CD4-positive, alpha-beta T cell (primary cell): ENCODE measurements at regions of chr14 and their contacts with region 1.

Region 1: DNA sequence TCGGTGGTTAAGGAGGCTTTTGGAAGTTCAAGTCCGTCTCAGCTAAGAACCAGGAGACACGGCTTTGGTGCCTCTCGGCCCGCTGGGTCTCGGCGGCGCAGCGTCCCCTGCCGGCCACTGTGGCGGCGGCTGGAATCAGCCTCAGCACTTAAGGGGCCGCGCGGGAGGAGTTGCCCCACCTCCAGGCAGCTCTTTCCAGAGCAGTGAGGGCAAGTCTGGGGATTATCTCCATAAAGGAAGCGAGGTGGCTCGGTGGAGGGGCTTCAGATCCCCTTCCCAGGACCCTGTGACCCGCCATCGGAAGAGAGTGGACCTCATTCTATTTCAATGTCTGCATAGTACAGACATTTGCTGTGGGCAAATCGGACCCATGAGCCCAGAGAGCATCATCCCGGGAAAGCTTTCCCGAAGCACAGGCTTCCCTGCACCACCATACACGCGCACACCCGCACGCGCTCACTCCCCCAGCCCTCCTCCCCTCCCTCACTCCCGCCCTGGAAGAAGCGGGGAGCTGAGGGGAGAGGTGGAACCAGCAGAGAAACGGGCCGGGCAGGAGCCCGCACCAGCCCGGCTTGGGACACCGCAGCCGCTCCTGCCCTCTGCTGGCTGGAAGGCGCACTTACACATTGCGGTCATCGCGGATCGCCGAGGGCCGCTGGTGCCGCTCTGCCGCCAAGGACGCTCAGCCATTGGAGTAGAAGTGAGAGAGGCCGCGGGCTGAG is 15.9 kb downstream of the RNASE2 start:
- DNase-seq: peak; percentile 55 to 90 (median 70)
- ATAC-seq: peak; percentile 87
- H3K4me3 ChIP-seq: peak overlapping the region; percentile 69
- H3K4me3 Mint-ChIP-seq: peak overlapping the region; percentile 93
- H3K27ac ChIP-seq: no peak overlapping the region
- H3K27ac Mint-ChIP-seq: no peak overlapping the region
- H3K4me1 ChIP-seq: peaks cover 15% of the 10 kb centered on the region
- H3K4me1 Mint-ChIP-seq: peaks cover 15% of the 10 kb centered on the region
- H3K27me3 ChIP-seq: peaks cover 12% of the 10 kb centered on the region in 2 experiments
- H3K27me3 Mint-ChIP-seq: peaks cover 39% of the 10 kb centered on the region
- CTCF ChIP-seq: peak; percentile 89

Region 2: DNA sequence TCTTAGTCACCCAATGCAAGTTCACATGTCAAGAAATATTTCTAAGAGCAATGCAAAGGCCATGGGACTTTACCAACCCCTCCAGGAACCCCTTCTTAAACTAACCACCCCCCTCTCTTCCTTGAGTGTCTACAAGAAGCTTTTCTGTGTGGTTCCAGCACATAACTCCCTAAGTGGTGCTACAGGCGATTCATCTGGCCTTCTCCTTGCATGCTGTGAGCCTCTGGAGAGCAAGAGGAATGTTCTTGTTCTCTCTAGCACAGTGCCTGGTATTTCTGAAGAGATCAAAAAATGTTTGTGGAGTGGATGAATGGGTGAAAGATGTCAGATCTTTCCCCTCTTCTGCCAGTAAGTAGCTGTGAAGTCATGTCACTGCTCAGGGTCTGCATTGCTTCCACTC is 374.0 kb before region 1 on chr14:
- CTCF ChIA-PET with region 1: no interaction called
- POLR2A ChIA-PET with region 1: no interaction called
- intact Hi-C with region 1: no loop called
- DNase-seq: no peak
- ATAC-seq: no peak
- H3K4me3 ChIP-seq: no peak overlapping the region
- H3K4me3 Mint-ChIP-seq: no peak overlapping the region
- H3K27ac ChIP-seq: no peak overlapping the region
- H3K27ac Mint-ChIP-seq: no peak overlapping the region
- H3K4me1 ChIP-seq: no peaks in the 10 kb centered on the region
- H3K4me1 Mint-ChIP-seq: peaks cover 6% of the 10 kb centered on the region
- H3K27me3 ChIP-seq: no peaks in the 10 kb centered on the region
- H3K27me3 Mint-ChIP-seq: no peaks in the 10 kb centered on the region
- CTCF ChIP-seq: no peak

Region 3: GRCh38 chr14:20697273-20698017 is 273.7 kb before region 1 on chr14:
- CTCF ChIA-PET with region 1: interaction called, 7 read pairs
- POLR2A ChIA-PET with region 1: no interaction called
- intact Hi-C with region 1: loop called (anchors 1 to 2 kb)
- DNase-seq: peak; percentile 42 to 83 (median 56)
- ATAC-seq: peak; percentile 80
- H3K4me3 ChIP-seq: no peak overlapping the region
- H3K4me3 Mint-ChIP-seq: no peak overlapping the region
- H3K27ac ChIP-seq: no peak overlapping the region
- H3K27ac Mint-ChIP-seq: no peak overlapping the region
- H3K4me1 ChIP-seq: no peaks in the 10 kb centered on the region
- H3K4me1 Mint-ChIP-seq: no peaks in the 10 kb centered on the region
- H3K27me3 ChIP-seq: no peaks in the 10 kb centered on the region
- H3K27me3 Mint-ChIP-seq: no peaks in the 10 kb centered on the region
- CTCF ChIP-seq: peak; percentile 78

Region 4: DNA sequence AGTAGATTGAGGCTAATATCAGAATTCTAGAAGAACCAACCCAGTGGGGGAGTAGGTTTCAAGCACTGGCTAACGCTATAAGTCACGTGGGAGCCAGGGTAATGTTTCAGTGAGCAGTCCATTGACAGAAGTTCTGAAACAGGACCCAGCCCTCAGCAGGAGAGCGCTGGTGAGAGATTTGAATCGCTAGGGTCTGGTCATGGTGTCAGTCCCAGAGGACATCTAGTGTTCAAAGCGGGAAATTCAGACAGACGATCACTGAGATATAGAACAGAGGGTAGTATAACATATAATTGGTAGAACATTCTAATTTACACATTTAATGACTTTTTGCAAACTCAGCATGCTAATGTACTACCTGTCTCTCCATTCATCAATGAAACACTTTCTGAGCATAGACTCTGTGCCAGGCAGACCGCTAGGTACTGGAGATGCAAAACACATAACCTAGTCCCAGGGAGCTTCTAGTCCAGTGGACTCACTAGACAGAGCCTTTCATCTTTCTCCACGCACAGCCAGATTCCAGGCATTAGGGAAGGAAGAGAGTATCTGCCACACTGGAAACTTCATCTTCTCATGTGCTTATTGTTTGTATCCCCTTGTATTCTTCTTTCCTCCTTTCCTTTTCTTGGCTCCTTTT is 115.4 kb before region 1 on chr14:
- CTCF ChIA-PET with region 1: interaction called, 18 read pairs
- POLR2A ChIA-PET with region 1: interaction called, 4 read pairs
- intact Hi-C with region 1: loop called (anchors 1 kb)
- DNase-seq: peak in 11 of 14 experiments; percentile 8 to 79 (median 25)
- ATAC-seq: peak; percentile 92
- H3K4me3 ChIP-seq: no peak overlapping the region
- H3K4me3 Mint-ChIP-seq: no peak overlapping the region
- H3K27ac ChIP-seq: no peak overlapping the region
- H3K27ac Mint-ChIP-seq: no peak overlapping the region
- H3K4me1 ChIP-seq: no peaks in the 10 kb centered on the region
- H3K4me1 Mint-ChIP-seq: no peaks in the 10 kb centered on the region
- H3K27me3 ChIP-seq: peaks cover 0 to 6% of the 10 kb centered on the region in 2 experiments
- H3K27me3 Mint-ChIP-seq: peaks cover 25% of the 10 kb centered on the region
- CTCF ChIP-seq: peak; percentile 67

Region 5: DNA sequence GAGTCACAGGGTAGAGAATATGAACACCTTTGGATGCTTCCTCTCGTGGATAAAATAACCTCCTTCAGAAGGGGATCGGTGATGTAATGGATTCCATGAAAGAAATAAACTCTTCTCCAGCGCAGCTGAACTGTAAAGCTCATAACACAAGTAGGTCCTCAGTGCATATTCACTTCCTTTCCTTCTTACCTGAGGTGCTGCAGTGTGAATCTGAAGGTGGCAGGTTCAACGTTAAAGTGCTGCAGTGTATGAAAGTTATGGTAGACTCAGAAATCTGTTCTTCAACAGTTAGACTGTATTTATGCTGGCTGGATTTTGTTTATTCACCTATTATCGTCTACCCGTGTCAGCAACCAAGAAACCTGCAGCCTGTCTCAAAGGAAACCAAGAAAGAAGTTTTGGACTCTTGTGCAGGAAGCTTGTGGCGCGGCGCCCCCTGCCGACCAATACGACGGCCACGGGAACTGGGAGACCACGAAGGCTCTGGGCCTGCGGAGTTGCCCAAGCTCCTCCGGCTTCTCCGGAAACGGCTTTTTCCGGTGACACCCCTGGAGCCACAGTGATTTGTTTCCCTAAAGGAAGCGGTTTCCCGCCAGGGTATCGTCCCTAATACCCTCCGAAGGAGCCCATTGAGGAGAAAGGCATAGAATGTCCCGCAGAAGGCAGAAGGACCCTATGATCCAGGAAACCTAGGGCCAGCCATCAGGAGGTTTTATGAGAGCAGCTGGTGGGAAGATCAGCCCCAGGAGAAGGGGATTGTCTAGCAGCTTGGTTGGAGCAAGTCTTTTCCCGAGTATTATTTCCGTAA is 97.6 kb before region 1 on chr14:
- CTCF ChIA-PET with region 1: interaction called, 6 read pairs
- POLR2A ChIA-PET with region 1: no interaction called
- intact Hi-C with region 1: loop called in 1 of 2 experiments (anchors 5 kb)
- DNase-seq: peak; percentile 57 to 85 (median 70)
- ATAC-seq: peak; percentile 71
- H3K4me3 ChIP-seq: no peak overlapping the region
- H3K4me3 Mint-ChIP-seq: no peak overlapping the region
- H3K27ac ChIP-seq: no peak overlapping the region
- H3K27ac Mint-ChIP-seq: no peak overlapping the region
- H3K4me1 ChIP-seq: peaks cover 10% of the 10 kb centered on the region
- H3K4me1 Mint-ChIP-seq: peaks cover 15% of the 10 kb centered on the region
- H3K27me3 ChIP-seq: peaks cover 0 to 6% of the 10 kb centered on the region in 2 experiments
- H3K27me3 Mint-ChIP-seq: peaks cover 4% of the 10 kb centered on the region
- CTCF ChIP-seq: peak; percentile 76

Region 6: GRCh38 chr14:20956376-20956976 is 14.7 kb before region 1 on chr14:
- CTCF ChIA-PET with region 1: interaction called, 23 read pairs
- POLR2A ChIA-PET with region 1: interaction called, 3 read pairs
- intact Hi-C with region 1: no loop called
- DNase-seq: peak in 2 of 14 experiments; percentile 7 to 13
- ATAC-seq: peak; percentile 68
- H3K4me3 ChIP-seq: no peak overlapping the region
- H3K4me3 Mint-ChIP-seq: peak overlapping the region; percentile 56
- H3K27ac ChIP-seq: no peak overlapping the region
- H3K27ac Mint-ChIP-seq: peak overlapping the region; percentile 15
- H3K4me1 ChIP-seq: peaks cover 10% of the 10 kb centered on the region
- H3K4me1 Mint-ChIP-seq: peaks cover 26% of the 10 kb centered on the region
- H3K27me3 ChIP-seq: peaks cover 0 to 4% of the 10 kb centered on the region in 2 experiments
- H3K27me3 Mint-ChIP-seq: no peaks in the 10 kb centered on the region
- CTCF ChIP-seq: no peak

Region 7: DNA sequence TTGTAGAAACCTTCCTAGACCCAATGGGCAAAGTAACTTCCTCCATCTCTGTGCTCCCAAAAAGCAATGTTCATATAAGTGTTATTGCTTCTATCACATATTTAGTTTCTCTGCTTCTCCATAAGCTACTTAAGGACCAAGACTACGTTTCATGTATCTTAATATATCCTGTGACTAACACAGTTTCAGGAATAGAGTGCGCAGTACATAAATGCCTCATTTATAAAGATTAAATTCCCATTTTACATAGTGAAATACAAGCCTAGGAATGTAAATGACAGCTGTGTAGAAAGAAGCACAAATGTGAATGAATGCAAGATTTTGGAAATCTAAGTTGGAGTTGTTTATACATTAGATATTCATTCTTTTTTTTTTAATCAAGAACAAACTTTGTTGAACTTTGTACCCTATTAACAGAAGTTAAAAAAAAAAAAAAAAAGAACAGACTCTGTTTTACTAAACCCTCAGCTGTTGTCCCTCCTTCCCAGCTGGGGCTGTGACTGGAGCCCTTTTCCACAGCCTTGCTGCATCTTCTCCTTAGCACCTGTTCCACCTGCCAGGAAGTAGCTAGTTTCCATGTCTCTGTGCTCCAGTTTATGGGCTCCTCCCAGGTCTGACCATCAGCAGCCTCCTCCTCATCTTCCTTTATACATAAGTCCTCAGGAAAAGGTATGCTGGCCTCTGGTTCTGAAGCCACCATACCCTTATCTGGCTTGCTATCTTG is 11.7 kb after region 1 on chr14:
- CTCF ChIA-PET with region 1: interaction called, 22 read pairs
- POLR2A ChIA-PET with region 1: no interaction called
- intact Hi-C with region 1: no loop called
- DNase-seq: no peak
- ATAC-seq: no peak
- H3K4me3 ChIP-seq: no peak overlapping the region
- H3K4me3 Mint-ChIP-seq: no peak overlapping the region
- H3K27ac ChIP-seq: no peak overlapping the region
- H3K27ac Mint-ChIP-seq: no peak overlapping the region
- H3K4me1 ChIP-seq: no peaks in the 10 kb centered on the region
- H3K4me1 Mint-ChIP-seq: no peaks in the 10 kb centered on the region
- H3K27me3 ChIP-seq: no peaks in the 10 kb centered on the region
- H3K27me3 Mint-ChIP-seq: peaks cover 13% of the 10 kb centered on the region
- CTCF ChIP-seq: no peak

Region 8: DNA sequence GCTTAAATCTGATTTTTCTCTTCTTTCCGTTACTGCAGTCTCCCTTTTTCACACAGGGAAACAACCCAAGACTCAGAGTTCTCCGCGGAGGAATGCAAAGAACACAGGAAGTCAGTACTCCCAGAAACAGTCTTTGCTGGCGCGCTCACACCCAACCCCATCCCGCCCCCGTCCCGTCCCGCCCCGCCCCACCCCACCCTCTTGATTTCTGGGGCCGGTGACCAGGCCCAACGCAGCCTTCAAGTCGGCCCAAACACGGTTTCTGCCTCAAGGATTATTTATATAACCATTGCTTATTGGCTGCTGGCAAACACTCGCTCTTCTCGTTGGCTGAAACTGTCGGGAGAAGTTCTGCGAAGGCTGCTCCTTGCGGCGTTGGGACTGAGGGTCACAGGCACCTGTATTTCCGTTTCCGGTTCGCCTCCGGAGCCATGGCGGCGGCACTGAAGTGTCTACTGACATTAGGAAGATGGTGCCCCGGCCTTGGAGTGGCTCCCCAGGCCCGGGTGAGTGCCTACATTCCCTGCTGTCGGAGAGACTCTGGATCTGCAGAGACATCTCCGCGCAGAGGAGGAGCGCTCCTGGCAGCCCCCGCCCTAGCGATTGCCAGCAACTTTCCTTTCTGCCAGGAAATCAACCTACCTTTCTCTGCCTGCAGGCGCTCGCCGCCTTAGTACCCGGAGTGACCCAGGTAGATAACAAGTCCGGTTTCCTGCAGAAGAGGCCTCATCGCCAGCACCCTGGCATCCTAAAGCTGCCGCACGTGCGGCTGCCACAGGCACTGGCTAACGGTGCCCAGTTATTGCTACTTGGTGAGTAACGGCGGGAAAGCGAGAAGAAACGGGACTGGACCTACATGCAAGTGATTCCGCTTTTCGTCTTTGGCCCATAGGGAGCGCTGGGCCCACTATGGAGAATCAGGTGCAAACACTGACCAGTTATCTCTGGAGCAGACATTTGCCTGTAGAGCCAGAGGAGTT is 18.7 kb after region 1 on chr14 and contains the start of gene METTL17:
- CTCF ChIA-PET with region 1: interaction called, 16 read pairs
- POLR2A ChIA-PET with region 1: no interaction called
- intact Hi-C with region 1: no loop called
- DNase-seq: peak; percentile 72 to 95 (median 80)
- ATAC-seq: peak; percentile 92
- H3K4me3 ChIP-seq: peak within 1 kb of the TSS; percentile 95
- H3K4me3 Mint-ChIP-seq: peak within 1 kb of the TSS; percentile 90
- H3K27ac ChIP-seq: peak within 1 kb of the TSS; percentile 59 to 73
- H3K27ac Mint-ChIP-seq: peak within 1 kb of the TSS; percentile 92
- H3K4me1 ChIP-seq: peaks cover 24% of the 10 kb centered on the region
- H3K4me1 Mint-ChIP-seq: peaks cover 36% of the 10 kb centered on the region
- H3K27me3 ChIP-seq: no peaks in the 10 kb centered on the region
- H3K27me3 Mint-ChIP-seq: no peaks in the 10 kb centered on the region
- CTCF ChIP-seq: no peak
- total RNA-seq, gene METTL17: 92.0 to 94.8 TPM